Left ventricle myocardium superior (tissue), 1 donor: ENCODE measurements at regions of chr10 and their contacts with region 1.

Region 1: DNA sequence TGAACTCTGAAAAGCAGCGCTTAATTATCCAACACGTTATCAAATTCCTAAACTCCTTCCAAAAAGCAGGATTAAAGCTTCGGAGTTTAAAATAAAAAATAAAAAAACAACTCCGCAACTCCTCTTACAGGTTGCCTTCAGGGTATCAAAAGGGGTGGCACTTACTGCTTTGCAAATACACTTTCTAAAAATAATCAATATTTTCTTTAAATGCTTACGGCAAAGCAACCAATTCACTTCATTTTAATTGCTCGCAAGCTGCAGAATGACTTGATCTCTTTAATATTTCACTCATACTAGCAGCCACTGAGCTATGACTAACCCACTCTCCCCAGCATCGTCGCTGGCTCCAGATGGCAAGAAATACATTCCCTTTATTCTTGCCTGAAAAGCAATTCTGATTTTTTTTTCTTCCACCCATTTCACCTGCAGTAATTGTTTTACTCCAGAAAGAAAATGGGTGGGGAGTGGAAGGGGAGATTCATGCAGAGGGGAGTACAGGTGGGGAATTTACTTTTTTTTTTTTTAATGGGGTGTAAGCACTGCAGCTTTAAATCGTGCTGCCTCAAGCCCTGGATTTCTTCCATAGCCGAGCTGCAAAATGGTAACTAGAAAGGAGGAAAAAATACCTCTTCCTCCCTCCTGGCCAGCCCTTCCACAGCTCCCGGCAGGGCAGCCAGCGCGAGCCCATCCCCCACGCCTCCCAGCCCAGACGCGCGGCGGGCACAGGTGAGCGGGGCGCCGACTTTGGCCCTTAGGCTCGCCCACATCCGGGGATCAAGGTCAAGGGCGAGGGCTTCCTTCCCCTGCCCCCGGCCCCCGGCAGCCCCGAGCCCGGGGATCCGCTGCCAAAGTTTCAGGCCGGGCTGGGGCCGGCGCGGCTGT is 54.2 kb upstream of the FHIP2A start:
- DNase-seq: peak; percentile 67
- ATAC-seq: peak; percentile 86

Region 2: DNA sequence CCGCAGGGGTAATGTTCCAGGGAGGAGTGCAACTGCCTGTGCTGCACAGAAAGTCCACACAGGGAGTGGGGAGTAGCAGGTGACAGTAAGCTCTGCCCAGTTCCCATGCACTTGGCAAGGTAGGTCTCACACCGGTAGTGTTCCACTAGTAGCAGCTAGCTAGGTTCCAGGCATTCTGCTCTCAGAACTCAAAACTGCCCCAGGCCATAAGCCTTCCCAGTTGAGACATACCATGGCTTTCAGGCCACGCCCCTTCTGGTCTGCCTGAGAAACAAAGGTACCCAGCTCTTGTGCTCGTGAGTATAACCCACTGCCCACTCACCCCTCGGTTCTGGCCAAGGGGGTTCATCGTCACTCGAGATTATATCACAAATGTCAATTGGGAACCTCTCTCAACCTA is 1075.1 kb before region 1 on chr10:
- intact Hi-C with region 1: no loop called
- DNase-seq: no peak
- ATAC-seq: no peak

Region 3: DNA sequence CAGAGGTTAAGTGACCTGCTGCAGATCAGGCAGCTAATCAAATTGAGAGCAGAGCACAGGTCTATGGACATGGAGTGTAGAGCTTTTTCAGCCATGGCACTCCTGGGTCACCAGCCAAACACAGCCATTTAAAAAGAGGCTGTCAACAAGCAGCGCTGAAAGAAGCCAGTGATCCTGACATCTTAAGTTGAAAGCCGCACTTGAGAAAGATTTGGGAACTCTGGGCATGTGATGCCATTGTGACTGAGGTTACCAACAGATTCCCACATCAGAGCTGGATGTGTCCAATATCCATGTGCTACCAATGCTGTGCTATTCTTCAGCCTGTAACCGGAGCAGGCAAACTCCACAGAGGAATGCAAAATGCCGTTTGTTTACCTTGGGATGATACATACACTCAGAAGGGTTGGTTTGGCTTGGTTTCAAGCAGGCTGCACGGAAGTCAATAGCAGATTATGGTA is 53.0 kb before region 1 on chr10:
- intact Hi-C with region 1: loop called (anchors 10 kb)
- DNase-seq: peak; percentile 47
- ATAC-seq: peak; percentile 85